K562 (cell line): ENCODE measurements at regions of chr4 and their contacts with region 1.

Region 1: GRCh38 chr4:119628308-119629141 is at the start of gene PDE5A:
- DNase-seq: peak; percentile 71 to 78 (median 76)
- ATAC-seq: peak; percentile 94
- H3K4me3 ChIP-seq: peak within 1 kb of the TSS; percentile 57
- H3K27ac ChIP-seq: no peak within 1 kb of the TSS
- H3K4me1 ChIP-seq: peaks cover 0 to 23% of the 10 kb centered on the region in 2 experiments; a peak in 3 of 5 replicates
- H3K27me3 ChIP-seq: peaks cover 4 to 12% of the 10 kb centered on the region in 2 experiments; a peak in 3 of 5 replicates
- CTCF ChIP-seq: peak; percentile 60 to 86 (median 71); a peak in 5 of 6 replicates
- EP300 ChIP-seq: no peak
- POLR2A ChIP-seq: no peak
- RAD21 ChIP-seq: peak; percentile 50 to 55
- polyA plus RNA-seq, gene PDE5A: 1.5 to 1.9 TPM

Region 2: GRCh38 chr4:119314356-119314755 is 314.2 kb before region 1 on chr4:
- CTCF ChIA-PET with region 1: no interaction called
- POLR2A ChIA-PET with region 1: no interaction called
- in situ Hi-C with region 1: no loop called
- intact Hi-C with region 1: loop called (anchors 2 kb)
- DNase-seq: peak in 1 of 4 experiments; percentile 44
- ATAC-seq: peak; percentile 83
- H3K4me3 ChIP-seq: no peak overlapping the region
- H3K27ac ChIP-seq: no peak overlapping the region
- H3K4me1 ChIP-seq: no peaks in the 10 kb centered on the region
- H3K27me3 ChIP-seq: peaks cover 0 to 5% of the 10 kb centered on the region in 2 experiments; a peak in 1 of 5 replicates
- CTCF ChIP-seq: peak; percentile 27 to 63 (median 44); a peak in 5 of 6 replicates
- EP300 ChIP-seq: no peak
- POLR2A ChIP-seq: no peak
- RAD21 ChIP-seq: peak; percentile 71 to 73

Region 3: DNA sequence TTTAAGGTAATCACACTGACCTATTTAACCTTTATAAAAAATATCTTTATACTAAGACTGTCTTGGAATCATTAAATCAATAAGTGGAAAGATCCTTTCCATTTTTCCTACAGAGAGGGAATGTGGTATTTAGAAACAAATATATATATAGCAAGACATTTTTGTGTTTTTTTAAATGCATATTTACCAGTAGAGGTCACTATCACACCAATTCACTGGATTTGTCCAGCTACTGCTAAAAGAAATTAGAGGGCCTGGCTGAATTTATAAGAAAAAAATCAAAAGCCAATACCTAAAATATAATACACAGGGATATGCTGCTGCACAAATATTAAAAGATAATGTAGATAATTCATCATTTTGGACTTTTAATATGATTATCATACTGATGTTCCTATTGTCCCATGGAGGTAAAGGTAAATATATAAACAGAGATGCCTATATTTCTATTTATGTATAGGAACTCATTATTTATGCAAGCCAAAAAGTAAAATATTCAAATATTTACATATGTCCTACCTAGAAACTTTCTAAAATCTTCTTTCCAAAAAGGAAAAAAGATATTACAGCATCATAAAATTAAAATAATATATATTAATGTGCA is 69.4 kb before region 1 on chr4:
- CTCF ChIA-PET with region 1: no interaction called
- POLR2A ChIA-PET with region 1: no interaction called
- in situ Hi-C with region 1: no loop called
- intact Hi-C with region 1: loop called (anchors 1 kb)
- DNase-seq: peak in 3 of 4 experiments; percentile 7 to 28 (median 12)
- ATAC-seq: peak; percentile 75
- H3K4me3 ChIP-seq: no peak overlapping the region
- H3K27ac ChIP-seq: no peak overlapping the region
- H3K4me1 ChIP-seq: peaks cover 0 to 3% of the 10 kb centered on the region in 2 experiments; a peak in 1 of 5 replicates
- H3K27me3 ChIP-seq: no peaks in the 10 kb centered on the region
- CTCF ChIP-seq: peak in 1 of 3 experiments; percentile 64; a peak in 2 of 6 replicates
- EP300 ChIP-seq: no peak
- POLR2A ChIP-seq: no peak
- RAD21 ChIP-seq: peak; percentile 28 to 46; a peak in 2 of 4 replicates

Region 4: GRCh38 chr4:120049732-120050494 is 421.4 kb after region 1 on chr4:
- CTCF ChIA-PET with region 1: interaction called, 3 read pairs
- POLR2A ChIA-PET with region 1: no interaction called
- in situ Hi-C with region 1: loop called (anchors 10 kb)
- intact Hi-C with region 1: loop called (anchors 1 kb)
- DNase-seq: peak; percentile 59 to 81 (median 66)
- ATAC-seq: peak; percentile 95
- H3K4me3 ChIP-seq: no peak overlapping the region
- H3K27ac ChIP-seq: no peak overlapping the region
- H3K4me1 ChIP-seq: no peaks in the 10 kb centered on the region; a peak in 1 of 5 replicates
- H3K27me3 ChIP-seq: no peaks in the 10 kb centered on the region
- CTCF ChIP-seq: peak; percentile 71 to 81 (median 79)
- EP300 ChIP-seq: no peak
- POLR2A ChIP-seq: no peak
- RAD21 ChIP-seq: peak; percentile 71 to 78